ENCODE measurements at regions of chr9 and their contacts with region 1.

Region 1: DNA sequence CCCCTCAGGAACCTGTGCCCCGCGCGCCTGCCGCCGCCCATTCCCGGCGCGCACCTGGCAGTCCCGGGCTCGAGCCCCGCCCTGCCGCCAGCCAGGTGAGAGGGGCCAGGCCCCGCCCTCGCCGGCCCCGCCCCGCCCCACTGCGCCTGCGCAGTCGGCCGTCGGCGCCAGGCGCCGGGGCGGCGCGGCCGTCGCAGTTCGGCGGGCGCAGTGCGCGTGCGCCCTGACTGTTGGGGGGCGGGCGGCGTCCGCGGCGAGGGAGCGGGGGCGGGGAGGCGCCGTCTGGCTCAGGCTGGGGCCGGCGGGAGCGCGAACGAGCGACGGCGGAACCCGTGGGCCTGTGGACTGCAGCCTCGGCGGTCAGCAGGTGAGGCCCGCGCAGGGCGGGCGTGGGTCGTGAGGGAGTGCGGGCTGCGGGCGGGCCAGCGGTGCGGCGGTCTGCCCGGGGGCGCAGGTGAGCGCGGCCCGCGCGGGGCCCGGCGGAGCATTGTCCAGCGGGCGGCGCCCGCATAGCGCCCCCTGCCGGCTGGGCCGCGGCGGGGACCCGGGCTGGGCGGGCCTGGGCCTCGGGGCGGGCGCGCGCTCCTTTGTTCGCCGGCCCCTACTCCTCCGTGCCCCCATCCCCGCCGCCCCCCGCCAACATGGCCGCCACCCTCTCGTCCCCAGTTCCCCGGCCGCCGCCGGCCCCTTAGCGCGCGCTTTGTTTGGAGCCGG is at the start of gene SPIN1:
- DNase-seq: peak; percentile 80
- H3K4me3 Mint-ChIP-seq: peak within 1 kb of the TSS; percentile 96
- H3K27ac Mint-ChIP-seq: peak within 1 kb of the TSS; percentile 97
- H3K4me1 Mint-ChIP-seq: peaks cover 41% of the 10 kb centered on the region
- H3K27me3 Mint-ChIP-seq: peaks cover 4% of the 10 kb centered on the region
- total RNA-seq, gene SPIN1: 39.1 and 41.8 TPM in 2 replicates

Region 2: GRCh38 chr9:87973730-87974292 is 414.5 kb before region 1 on chr9:
- intact Hi-C with region 1: loop called (anchors 2 kb)
- DNase-seq: no peak
- H3K4me3 Mint-ChIP-seq: peak overlapping the region; percentile 93
- H3K27ac Mint-ChIP-seq: peak overlapping the region; percentile 76
- H3K4me1 Mint-ChIP-seq: peaks cover 13% of the 10 kb centered on the region
- H3K27me3 Mint-ChIP-seq: peaks cover 6% of the 10 kb centered on the region

Region 3: DNA sequence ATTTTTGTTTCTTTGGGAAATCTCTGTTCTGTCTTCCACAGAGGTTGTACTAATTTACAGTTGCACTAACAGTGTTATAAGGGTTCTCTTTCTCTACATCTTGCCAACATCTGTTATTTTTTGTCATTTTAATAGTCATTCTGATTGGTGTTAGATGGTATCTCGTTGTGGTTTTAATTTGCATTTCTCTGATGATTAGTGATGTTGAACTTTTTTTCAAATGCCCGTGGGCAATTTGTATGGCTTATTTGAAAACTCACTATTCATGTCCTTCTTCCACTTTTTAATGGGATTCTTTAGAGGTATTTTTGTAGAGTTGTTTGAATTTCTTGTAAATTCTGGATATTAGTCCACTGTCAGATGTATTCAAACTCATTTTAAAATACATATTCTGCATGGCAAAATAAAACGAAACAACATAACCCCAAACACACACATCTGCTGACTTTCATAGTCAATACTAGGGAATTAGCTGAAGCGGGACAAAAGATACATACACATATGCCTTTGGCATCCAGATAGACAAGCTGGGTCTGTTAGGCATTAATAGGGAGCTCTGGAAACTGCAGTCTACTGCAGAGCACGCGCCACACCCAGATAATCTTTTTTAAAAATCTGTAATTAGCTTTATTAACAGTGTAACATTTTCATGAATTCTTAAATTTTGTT is 244.2 kb before region 1 on chr9:
- intact Hi-C with region 1: no loop called
- DNase-seq: no peak
- H3K4me3 Mint-ChIP-seq: no peak overlapping the region
- H3K27ac Mint-ChIP-seq: no peak overlapping the region
- H3K4me1 Mint-ChIP-seq: no peaks in the 10 kb centered on the region
- H3K27me3 Mint-ChIP-seq: peaks cover 29% of the 10 kb centered on the region

Region 4: DNA sequence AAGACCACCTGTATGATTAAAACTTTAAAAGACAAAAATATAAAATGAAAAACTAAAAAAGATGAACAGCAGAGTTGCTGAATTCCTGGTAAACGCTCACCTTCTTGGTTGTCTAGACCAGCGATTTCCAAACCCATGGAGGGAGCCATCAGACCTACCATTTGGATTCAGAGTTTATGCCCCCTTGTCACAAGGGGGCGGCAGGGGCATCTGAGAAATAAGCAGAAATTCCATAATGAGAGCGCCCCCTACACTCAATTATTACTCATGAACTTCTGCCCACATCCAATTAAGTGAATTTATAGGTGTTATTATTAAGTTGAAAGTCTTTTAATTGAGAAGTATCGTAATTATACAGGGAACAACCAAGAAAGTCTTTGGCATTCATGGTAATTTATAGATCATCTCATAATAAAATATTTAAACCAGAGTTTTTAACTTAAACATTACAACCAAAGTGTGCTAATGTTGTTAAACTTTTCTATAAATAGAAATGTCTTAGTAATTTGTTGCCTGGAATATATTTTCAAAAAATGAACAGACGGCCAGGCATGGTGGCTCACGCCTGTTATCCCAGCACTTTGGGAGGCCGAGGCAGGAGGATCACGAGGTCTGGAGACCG is 214.8 kb before region 1 on chr9:
- intact Hi-C with region 1: loop called (anchors 1 kb)
- DNase-seq: peak; percentile 15
- H3K4me3 Mint-ChIP-seq: no peak overlapping the region
- H3K27ac Mint-ChIP-seq: no peak overlapping the region
- H3K4me1 Mint-ChIP-seq: peaks cover 2% of the 10 kb centered on the region
- H3K27me3 Mint-ChIP-seq: peaks cover 18% of the 10 kb centered on the region

Region 5: DNA sequence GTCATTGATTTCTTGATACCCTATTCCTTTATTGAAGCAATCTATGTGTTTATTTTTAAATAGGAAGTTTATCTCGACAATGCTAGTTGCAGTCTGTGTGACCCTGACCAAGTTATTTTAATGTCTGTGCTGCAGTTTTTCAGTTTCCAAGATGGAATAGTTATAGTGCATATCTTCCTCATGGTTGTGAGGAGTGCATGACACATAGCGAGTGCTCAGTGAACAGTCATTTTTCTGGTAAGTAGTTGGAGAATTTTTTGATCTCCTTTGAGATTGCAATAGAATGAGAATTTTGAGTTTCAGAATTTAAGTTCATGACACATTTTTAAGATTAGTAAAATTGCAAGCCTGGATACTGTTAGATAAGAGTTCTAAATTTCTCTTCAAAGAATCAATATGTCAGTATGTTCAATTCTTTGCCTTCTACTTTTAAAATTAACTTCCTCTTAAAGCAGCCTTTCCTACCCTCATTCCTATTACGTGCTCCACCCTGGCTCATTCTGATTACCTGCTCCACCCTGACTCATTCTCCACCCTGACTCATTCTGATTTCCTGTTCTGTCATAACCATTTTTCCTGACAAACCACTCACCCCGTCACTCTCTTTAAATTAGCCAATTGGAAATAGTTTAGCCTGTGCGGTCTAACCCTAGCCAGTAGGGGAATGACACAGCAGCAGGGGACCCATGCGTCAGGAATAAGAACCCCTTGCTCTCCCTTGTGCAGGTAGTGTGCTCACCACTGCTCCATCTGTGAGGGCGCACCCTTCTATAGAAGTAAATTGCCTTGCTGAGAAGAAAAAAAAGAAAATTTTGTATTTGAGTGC is 30.6 kb after region 1 on chr9:
- intact Hi-C with region 1: loop called (anchors 2 kb)
- DNase-seq: peak; percentile 18
- H3K4me3 Mint-ChIP-seq: no peak overlapping the region
- H3K27ac Mint-ChIP-seq: peak overlapping the region; percentile 78
- H3K4me1 Mint-ChIP-seq: peaks cover 20% of the 10 kb centered on the region
- H3K27me3 Mint-ChIP-seq: no peaks in the 10 kb centered on the region

Region 6: GRCh38 chr9:88534456-88535261 is 146.3 kb after region 1 on chr9 and contains the start of gene NXNL2:
- intact Hi-C with region 1: loop called (anchors 2 kb)
- DNase-seq: peak; percentile 23
- H3K4me3 Mint-ChIP-seq: peak within 1 kb of the TSS; percentile 30
- H3K27ac Mint-ChIP-seq: no peak within 1 kb of the TSS
- H3K4me1 Mint-ChIP-seq: peaks cover 13% of the 10 kb centered on the region
- H3K27me3 Mint-ChIP-seq: peaks cover 48% of the 10 kb centered on the region
- total RNA-seq, gene NXNL2: not detected in 2 replicates